A673 (cell line): ENCODE measurements at regions of chr4 and their contacts with region 1.

Region 1: DNA sequence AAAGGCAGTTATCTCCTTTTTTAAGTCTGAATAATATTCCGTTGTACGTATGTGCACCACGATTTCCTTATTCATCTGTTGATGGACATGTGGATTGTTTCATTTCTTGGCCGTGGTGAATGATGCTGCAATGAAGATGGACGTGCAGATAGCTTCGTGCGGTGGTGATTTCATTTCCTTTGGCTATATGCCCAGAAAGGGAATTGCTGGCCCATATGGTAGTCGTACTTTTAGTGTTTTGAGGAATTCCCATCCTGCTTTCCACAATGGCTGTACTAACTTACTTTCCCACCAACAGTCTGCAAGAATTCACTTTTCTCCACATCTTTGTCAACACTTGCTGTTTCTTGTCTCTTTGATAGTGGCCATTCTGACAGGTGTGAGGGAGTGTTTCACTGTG is 12.8 kb downstream of the ZFP42 start:
- DNase-seq: peak; percentile 90
- H3K4me3 ChIP-seq: no peak overlapping the region
- H3K27ac ChIP-seq: no peak overlapping the region
- H3K4me1 ChIP-seq: peaks cover 11% of the 10 kb centered on the region
- H3K27me3 ChIP-seq: no peaks in the 10 kb centered on the region
- CTCF ChIP-seq: no peak

Region 2: GRCh38 chr4:188196134-188196735 is 187.9 kb after region 1 on chr4:
- CTCF ChIA-PET with region 1: no interaction called
- POLR2A ChIA-PET with region 1: no interaction called
- intact Hi-C with region 1: loop called (anchors 10 kb)
- DNase-seq: peak; percentile 81
- H3K4me3 ChIP-seq: no peak overlapping the region
- H3K27ac ChIP-seq: peak overlapping the region; percentile 67
- H3K4me1 ChIP-seq: peaks cover 21% of the 10 kb centered on the region
- H3K27me3 ChIP-seq: no peaks in the 10 kb centered on the region
- CTCF ChIP-seq: no peak